MCF 10A (cell line): ENCODE measurements at regions of chr9 and their contacts with region 1.

Region 1: DNA sequence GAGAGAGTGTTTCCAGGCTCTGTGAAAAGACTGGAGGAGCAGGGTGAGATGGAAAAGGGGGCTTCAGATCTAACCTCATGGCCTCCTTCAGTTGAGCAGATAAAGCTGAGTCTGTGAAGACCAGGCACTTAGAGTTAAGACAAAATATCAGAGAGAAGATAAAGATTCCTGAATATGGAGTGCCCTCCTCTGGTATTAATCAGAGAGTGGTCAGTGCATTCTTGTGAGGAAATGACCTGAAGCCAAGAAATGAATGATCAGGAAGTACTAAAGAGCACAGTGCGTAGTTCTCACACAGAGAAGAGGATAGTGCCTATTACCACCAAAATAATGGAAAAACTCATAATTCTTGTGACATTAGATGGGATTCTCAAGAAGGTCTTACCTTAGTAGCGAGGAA is 1417.0 kb upstream of the ACO1 start:
- DNase-seq: peak; percentile 27
- H3K4me3 Mint-ChIP-seq: no peak overlapping the region
- H3K27ac Mint-ChIP-seq: no peak overlapping the region
- H3K4me1 Mint-ChIP-seq: no peaks in the 10 kb centered on the region
- H3K27me3 Mint-ChIP-seq: peaks cover 21% of the 10 kb centered on the region
- CTCF ChIP-seq: peak; percentile 41

Region 2: GRCh38 chr9:29830821-29831220 is 1136.7 kb before region 1 on chr9:
- CTCF ChIA-PET with region 1: no interaction called
- POLR2A ChIA-PET with region 1: no interaction called
- intact Hi-C with region 1: loop called (anchors 5 kb)
- DNase-seq: peak; percentile 61
- H3K4me3 Mint-ChIP-seq: no peak overlapping the region
- H3K27ac Mint-ChIP-seq: no peak overlapping the region
- H3K4me1 Mint-ChIP-seq: peaks cover 5% of the 10 kb centered on the region
- H3K27me3 Mint-ChIP-seq: no peaks in the 10 kb centered on the region
- CTCF ChIP-seq: peak; percentile 76

Region 3: DNA sequence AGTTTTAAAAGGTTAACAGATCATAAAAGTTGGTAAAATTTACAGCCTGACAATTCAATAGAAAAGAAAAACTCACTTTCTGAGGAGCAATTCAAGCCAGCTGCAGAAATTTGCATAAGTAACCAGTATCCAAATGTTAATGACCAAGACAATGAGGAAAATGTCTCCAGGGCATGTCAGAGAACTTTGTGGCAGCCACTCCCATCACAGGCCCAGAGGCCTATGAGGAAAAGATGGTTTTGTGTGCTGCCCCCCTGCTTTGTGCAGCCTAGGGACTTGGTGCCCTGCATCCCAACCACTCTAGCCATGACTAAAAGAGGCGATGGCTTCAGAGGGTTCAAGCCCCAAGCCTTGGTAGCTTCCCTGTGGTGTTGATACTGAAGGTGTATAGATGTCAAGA is 10.5 kb after region 1 on chr9:
- CTCF ChIA-PET with region 1: no interaction called
- POLR2A ChIA-PET with region 1: no interaction called
- intact Hi-C with region 1: no loop called
- DNase-seq: no peak
- H3K4me3 Mint-ChIP-seq: no peak overlapping the region
- H3K27ac Mint-ChIP-seq: no peak overlapping the region
- H3K4me1 Mint-ChIP-seq: no peaks in the 10 kb centered on the region
- H3K27me3 Mint-ChIP-seq: peaks cover 23% of the 10 kb centered on the region
- CTCF ChIP-seq: no peak

Region 4: DNA sequence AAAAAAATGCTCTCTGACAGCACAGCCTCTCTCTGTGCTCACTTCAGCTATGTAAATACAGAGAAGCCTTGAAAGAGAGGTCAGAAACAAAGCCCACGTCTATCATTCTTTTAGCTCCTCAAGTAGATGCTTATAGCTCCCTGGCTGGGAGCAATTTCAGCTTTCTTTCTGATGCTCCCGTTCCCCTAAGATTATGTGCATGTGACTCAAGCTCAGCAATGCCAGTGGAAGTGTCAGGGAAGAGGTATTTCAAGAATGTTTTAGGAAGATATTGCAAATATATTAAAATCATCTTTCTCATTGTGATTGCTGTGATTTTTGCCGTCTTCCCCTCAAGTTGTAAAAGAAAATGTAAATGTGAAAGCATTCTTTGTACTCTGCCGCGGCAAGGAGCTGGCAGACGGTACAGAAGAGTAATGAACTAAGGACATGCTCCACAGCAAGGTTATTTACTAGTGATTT is 63.3 kb after region 1 on chr9:
- CTCF ChIA-PET with region 1: no interaction called
- POLR2A ChIA-PET with region 1: no interaction called
- intact Hi-C with region 1: no loop called
- DNase-seq: peak; percentile 3
- H3K4me3 Mint-ChIP-seq: no peak overlapping the region
- H3K27ac Mint-ChIP-seq: no peak overlapping the region
- H3K4me1 Mint-ChIP-seq: peaks cover 5% of the 10 kb centered on the region
- H3K27me3 Mint-ChIP-seq: peaks cover 30% of the 10 kb centered on the region
- CTCF ChIP-seq: no peak